ENCODE measurements at regions of chr3 and their contacts with region 1.

Region 1: DNA sequence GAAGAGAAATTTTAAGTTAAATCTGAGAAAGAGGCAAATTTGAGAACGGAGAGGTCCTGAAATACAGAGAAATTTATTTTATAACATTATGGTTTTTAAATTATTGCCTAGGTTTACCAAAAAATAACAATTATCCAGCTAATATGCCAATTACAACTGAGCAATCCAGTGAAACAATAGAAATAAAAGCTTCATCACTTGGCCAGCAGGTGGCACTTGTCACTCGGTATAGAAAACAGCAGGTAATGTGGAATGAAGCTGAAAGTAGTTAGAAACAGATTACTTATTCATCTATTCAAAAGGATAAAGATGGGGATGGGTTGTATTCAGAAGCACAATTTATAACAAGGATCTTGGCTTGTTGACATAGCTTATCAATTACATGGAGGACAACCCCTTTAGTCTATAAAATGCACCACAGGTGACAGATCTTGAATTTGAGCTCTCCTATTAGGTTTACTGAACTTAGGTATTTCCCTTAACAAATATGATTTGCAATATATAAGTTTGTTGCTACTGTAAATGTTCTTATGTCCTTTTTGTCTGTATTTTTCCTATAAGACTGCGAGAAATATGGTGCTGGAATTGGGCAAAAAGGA is 70.1 kb upstream of the GUCA1C start:
- DNase-seq: no peak
- ATAC-seq: peak; percentile 86; the same call in 1 of the 2 replicates
- H3K4me3 ChIP-seq: no peak overlapping the region
- H3K27ac ChIP-seq: no peak overlapping the region
- H3K4me1 ChIP-seq: no peaks in the 10 kb centered on the region
- H3K27me3 ChIP-seq: peaks cover 3% of the 10 kb centered on the region; the same call in 1 of the 2 replicates
- CTCF ChIP-seq: peak; percentile 77; the same call in 1 of the 2 replicates

Region 2: GRCh38 chr3:108378153-108378951 is 645.4 kb before region 1 on chr3:
- CTCF ChIA-PET with region 1: no interaction called
- POLR2A ChIA-PET with region 1: no interaction called
- in situ Hi-C with region 1: no loop called
- intact Hi-C with region 1: no loop called
- DNase-seq: no peak
- ATAC-seq: no peak
- H3K4me3 ChIP-seq: no peak overlapping the region
- H3K27ac ChIP-seq: no peak overlapping the region
- H3K4me1 ChIP-seq: no peaks in the 10 kb centered on the region
- H3K27me3 ChIP-seq: no peaks in the 10 kb centered on the region
- CTCF ChIP-seq: no peak

Region 3: GRCh38 chr3:109081746-109082510 is 58.2 kb after region 1 on chr3:
- CTCF ChIA-PET with region 1: interaction called, 9 read pairs
- POLR2A ChIA-PET with region 1: no interaction called
- in situ Hi-C with region 1: no loop called
- intact Hi-C with region 1: loop called (anchors 2 kb)
- DNase-seq: peak; percentile 38
- ATAC-seq: peak; percentile 90
- H3K4me3 ChIP-seq: no peak overlapping the region
- H3K27ac ChIP-seq: no peak overlapping the region
- H3K4me1 ChIP-seq: no peaks in the 10 kb centered on the region
- H3K27me3 ChIP-seq: no peaks in the 10 kb centered on the region
- CTCF ChIP-seq: peak; percentile 92

Region 4: DNA sequence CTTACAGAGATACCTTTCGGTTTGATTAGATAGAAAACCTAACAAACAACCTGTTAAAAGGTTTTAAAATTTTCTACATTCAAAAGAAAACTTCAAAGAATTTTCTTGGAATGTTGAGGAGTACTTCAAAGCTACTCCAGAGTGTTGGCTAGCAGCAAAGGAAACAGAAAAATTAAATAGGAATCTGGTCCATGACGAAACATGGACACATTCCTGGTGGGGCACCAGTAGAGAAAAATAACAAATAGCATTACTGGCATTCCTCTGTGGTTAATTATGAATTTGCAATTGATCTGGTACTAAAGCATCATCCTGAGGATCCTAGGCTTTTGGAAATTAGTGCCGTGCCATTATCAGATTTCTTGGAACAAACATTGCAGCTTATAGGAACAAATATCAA is 373.1 kb after region 1 on chr3:
- CTCF ChIA-PET with region 1: interaction called, 18 read pairs
- POLR2A ChIA-PET with region 1: no interaction called
- in situ Hi-C with region 1: no loop called
- intact Hi-C with region 1: no loop called
- DNase-seq: no peak
- ATAC-seq: no peak
- H3K4me3 ChIP-seq: no peak overlapping the region
- H3K27ac ChIP-seq: no peak overlapping the region
- H3K4me1 ChIP-seq: no peaks in the 10 kb centered on the region
- H3K27me3 ChIP-seq: no peaks in the 10 kb centered on the region
- CTCF ChIP-seq: no peak

Region 5: DNA sequence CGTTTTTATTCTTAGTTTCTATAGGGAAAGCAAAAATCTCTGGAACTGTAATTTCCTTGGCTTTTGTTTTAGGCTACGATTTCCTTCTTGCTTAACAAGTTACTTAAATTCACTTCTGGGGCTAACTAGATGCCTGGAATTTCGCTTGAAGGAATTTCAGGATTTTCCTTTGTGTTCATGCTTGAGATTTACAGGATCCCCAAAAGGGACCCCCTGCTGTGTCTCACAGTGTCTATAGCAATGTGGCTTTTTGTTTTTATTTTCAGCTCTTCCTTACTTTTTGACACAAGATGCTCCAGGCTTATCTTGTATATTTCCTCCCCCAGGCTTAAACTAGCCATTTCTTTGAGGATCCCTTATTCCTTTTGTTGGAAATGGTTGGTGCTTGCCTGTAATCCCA is 409.1 kb after region 1 on chr3:
- CTCF ChIA-PET with region 1: no interaction called
- POLR2A ChIA-PET with region 1: no interaction called
- in situ Hi-C with region 1: no loop called
- intact Hi-C with region 1: no loop called
- DNase-seq: no peak
- ATAC-seq: no peak
- H3K4me3 ChIP-seq: no peak overlapping the region
- H3K27ac ChIP-seq: no peak overlapping the region
- H3K4me1 ChIP-seq: no peaks in the 10 kb centered on the region
- H3K27me3 ChIP-seq: no peaks in the 10 kb centered on the region
- CTCF ChIP-seq: no peak

Measured in Panc1 (cell line).